ENCODE measurements at regions of chrX and their contacts with region 1.

Region 1: GRCh38 chrX:68828740-68829552 is at the start of gene EFNB1:
- DNase-seq: peak; percentile 69
- ATAC-seq: peak; percentile 94
- H3K4me3 Mint-ChIP-seq: peak within 1 kb of the TSS; percentile 91
- H3K27ac Mint-ChIP-seq: peak within 1 kb of the TSS; percentile 76
- H3K4me1 Mint-ChIP-seq: peaks cover 20% of the 10 kb centered on the region
- H3K27me3 Mint-ChIP-seq: peaks cover 2% of the 10 kb centered on the region
- CTCF ChIP-seq: no peak
- total RNA-seq, gene EFNB1: 2.0 and 2.3 TPM in 2 replicates

Region 2: GRCh38 chrX:68498508-68499379 is 330.2 kb before region 1 on chrX and contains the start of gene YIPF6:
- CTCF ChIA-PET with region 1: no interaction called
- POLR2A ChIA-PET with region 1: interaction called, 7 read pairs
- intact Hi-C with region 1: loop called (anchors 5 kb)
- DNase-seq: peak; percentile 58
- ATAC-seq: peak; percentile 92
- H3K4me3 Mint-ChIP-seq: peak within 1 kb of the TSS; percentile 95
- H3K27ac Mint-ChIP-seq: peak within 1 kb of the TSS; percentile 92
- H3K4me1 Mint-ChIP-seq: peaks cover 33% of the 10 kb centered on the region
- H3K27me3 Mint-ChIP-seq: no peaks in the 10 kb centered on the region
- CTCF ChIP-seq: no peak
- total RNA-seq, gene YIPF6: 17.9 and 20.2 TPM in 2 replicates

Region 3: GRCh38 chrX:69158166-69158980 is 329.4 kb after region 1 on chrX:
- CTCF ChIA-PET with region 1: interaction called, 10 read pairs
- POLR2A ChIA-PET with region 1: no interaction called
- intact Hi-C with region 1: no loop called
- DNase-seq: no peak
- ATAC-seq: peak; percentile 73
- H3K4me3 Mint-ChIP-seq: no peak overlapping the region
- H3K27ac Mint-ChIP-seq: no peak overlapping the region
- H3K4me1 Mint-ChIP-seq: peaks cover 10% of the 10 kb centered on the region
- H3K27me3 Mint-ChIP-seq: no peaks in the 10 kb centered on the region
- CTCF ChIP-seq: no peak

Region 4: GRCh38 chrX:69222103-69223090 is 393.5 kb after region 1 on chrX:
- CTCF ChIA-PET with region 1: interaction called, 30 read pairs
- POLR2A ChIA-PET with region 1: no interaction called
- intact Hi-C with region 1: loop called (anchors 1 kb)
- DNase-seq: peak; percentile 45
- ATAC-seq: peak; percentile 71
- H3K4me3 Mint-ChIP-seq: no peak overlapping the region
- H3K27ac Mint-ChIP-seq: no peak overlapping the region
- H3K4me1 Mint-ChIP-seq: peaks cover 1% of the 10 kb centered on the region
- H3K27me3 Mint-ChIP-seq: peaks cover 2% of the 10 kb centered on the region
- CTCF ChIP-seq: no peak

Region 5: GRCh38 chrX:69387567-69388487 is 558.9 kb after region 1 on chrX:
- CTCF ChIA-PET with region 1: interaction called, 8 read pairs
- POLR2A ChIA-PET with region 1: no interaction called
- intact Hi-C with region 1: loop called (anchors 1 kb)
- DNase-seq: peak; percentile 14
- ATAC-seq: peak; percentile 18
- H3K4me3 Mint-ChIP-seq: no peak overlapping the region
- H3K27ac Mint-ChIP-seq: no peak overlapping the region
- H3K4me1 Mint-ChIP-seq: no peaks in the 10 kb centered on the region
- H3K27me3 Mint-ChIP-seq: peaks cover 3% of the 10 kb centered on the region
- CTCF ChIP-seq: no peak

Region 6: DNA sequence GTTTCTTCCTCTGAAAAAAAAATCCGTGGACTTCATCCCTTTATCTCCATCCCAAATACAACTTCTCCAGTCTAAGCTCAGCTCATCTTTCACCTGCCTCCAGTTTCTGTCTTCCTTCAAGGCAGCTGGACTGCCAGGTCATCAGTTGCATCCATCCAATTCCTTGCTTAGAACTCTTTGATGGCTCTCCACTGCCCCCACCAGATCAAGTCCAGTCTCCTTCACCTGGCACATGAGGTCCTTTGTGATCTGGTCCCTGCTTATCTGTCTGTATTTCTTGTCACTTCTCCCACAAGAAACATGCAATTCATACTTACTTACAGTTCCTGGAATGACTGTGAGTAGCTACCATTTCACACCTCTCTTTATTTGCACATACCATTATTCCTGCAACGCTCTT is 1267.1 kb after region 1 on chrX:
- CTCF ChIA-PET with region 1: interaction called, 7 read pairs
- POLR2A ChIA-PET with region 1: no interaction called
- intact Hi-C with region 1: loop called (anchors 5 kb)
- DNase-seq: no peak
- ATAC-seq: no peak
- H3K4me3 Mint-ChIP-seq: no peak overlapping the region
- H3K27ac Mint-ChIP-seq: no peak overlapping the region
- H3K4me1 Mint-ChIP-seq: no peaks in the 10 kb centered on the region
- H3K27me3 Mint-ChIP-seq: peaks cover 10% of the 10 kb centered on the region
- CTCF ChIP-seq: no peak

Region 7: GRCh38 chrX:70454441-70455365 is 1625.8 kb after region 1 on chrX:
- CTCF ChIA-PET with region 1: no interaction called
- POLR2A ChIA-PET with region 1: no interaction called
- intact Hi-C with region 1: loop called (anchors 10 kb)
- DNase-seq: peak; percentile 39
- ATAC-seq: peak; percentile 55
- H3K4me3 Mint-ChIP-seq: peak overlapping the region; percentile 78
- H3K27ac Mint-ChIP-seq: peak overlapping the region; percentile 46
- H3K4me1 Mint-ChIP-seq: peaks cover 43% of the 10 kb centered on the region
- H3K27me3 Mint-ChIP-seq: no peaks in the 10 kb centered on the region
- CTCF ChIP-seq: no peak